ENCODE measurements at regions of chrX and their contacts with region 1.

Region 1: GRCh38 chrX:112841114-112841819 is 636 bp upstream of the AMOT start:
- DNase-seq: peak; percentile 89 to 91
- ATAC-seq: peak; percentile 95
- H3K4me3 ChIP-seq: peak overlapping the region; percentile 51 to 74
- H3K27ac ChIP-seq: peak overlapping the region in 1 of 2 donors; percentile 64
- H3K4me1 ChIP-seq: no peaks in the 10 kb centered on the region
- H3K27me3 ChIP-seq: no peaks in the 10 kb centered on the region

Region 2: GRCh38 chrX:112678831-112679230 is 162.4 kb before region 1 on chrX:
- intact Hi-C with region 1: loop called in 1 of 2 experiments (anchors 10 kb)
- DNase-seq: no peak
- ATAC-seq: no peak
- H3K4me3 ChIP-seq: no peak overlapping the region
- H3K27ac ChIP-seq: no peak overlapping the region
- H3K4me1 ChIP-seq: no peaks in the 10 kb centered on the region
- H3K27me3 ChIP-seq: no peaks in the 10 kb centered on the region

Region 3: DNA sequence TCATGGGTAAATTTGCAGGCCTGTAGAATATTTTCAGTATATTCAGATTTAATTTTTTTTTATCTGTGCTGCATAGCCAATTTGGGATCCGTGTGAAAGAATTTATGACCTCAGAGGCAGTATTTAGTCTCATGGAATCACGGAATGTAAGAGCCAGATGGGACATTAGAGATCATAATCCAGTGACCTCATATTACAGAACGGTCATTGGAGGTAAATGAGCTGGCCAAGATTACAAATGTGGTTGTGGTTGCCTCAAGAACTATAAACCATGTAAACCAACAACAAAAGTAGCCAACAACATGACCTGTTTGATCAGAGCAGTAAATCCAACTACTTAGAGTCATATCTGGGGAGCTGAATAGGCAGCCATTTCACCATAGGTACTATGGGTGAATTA is 72.2 kb before region 1 on chrX:
- intact Hi-C with region 1: no loop called
- DNase-seq: no peak
- ATAC-seq: no peak
- H3K4me3 ChIP-seq: no peak overlapping the region
- H3K27ac ChIP-seq: no peak overlapping the region
- H3K4me1 ChIP-seq: no peaks in the 10 kb centered on the region
- H3K27me3 ChIP-seq: no peaks in the 10 kb centered on the region

Region 4: DNA sequence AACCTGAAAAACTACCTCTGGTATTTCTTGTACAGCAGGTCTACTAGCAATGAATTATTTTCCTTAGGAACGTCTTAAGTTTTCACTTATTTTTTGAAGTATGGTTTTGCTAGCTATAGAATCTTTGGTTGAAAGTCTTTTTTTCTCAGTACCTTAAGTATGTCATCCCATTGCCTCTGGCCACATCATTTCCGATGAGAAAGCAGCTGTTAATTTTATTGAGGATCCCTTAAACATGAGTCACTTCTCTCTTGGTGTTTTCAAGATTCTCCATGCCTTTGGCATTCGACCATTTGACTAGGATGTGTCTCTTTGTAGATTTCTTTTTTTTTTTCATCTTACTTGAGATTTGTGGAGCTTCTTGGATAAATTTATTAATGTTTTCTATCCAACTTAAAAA is 803.2 kb after region 1 on chrX:
- intact Hi-C with region 1: no loop called
- DNase-seq: no peak
- ATAC-seq: no peak
- H3K4me3 ChIP-seq: no peak overlapping the region
- H3K27ac ChIP-seq: no peak overlapping the region
- H3K4me1 ChIP-seq: no peaks in the 10 kb centered on the region
- H3K27me3 ChIP-seq: no peaks in the 10 kb centered on the region

Measured in aorta (tissue), 5 donors.